ENCODE measurements at regions of chr2 and their contacts with region 1.

Region 1: DNA sequence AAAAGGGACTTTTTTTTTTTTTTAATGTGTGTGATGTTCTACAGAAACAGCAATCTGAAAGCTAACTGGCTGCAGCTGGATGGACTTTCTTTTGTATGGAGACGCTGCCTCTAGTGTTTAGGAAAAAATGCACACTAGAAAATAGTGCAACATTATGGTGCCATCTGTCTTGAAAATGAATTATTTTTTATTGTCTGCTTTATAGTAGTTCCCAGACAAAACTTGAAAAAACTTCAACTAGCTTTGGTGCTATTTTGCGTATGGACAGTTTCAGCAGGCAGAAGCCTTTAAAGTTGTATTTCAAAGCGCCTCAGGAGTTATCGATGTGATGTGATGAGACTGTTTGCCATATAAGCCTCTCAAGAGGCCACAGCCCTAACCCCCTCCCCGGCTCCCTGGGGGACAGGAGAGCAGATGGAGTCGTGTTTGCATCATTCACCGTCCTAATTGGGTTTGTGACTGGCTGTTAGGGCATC is 86.9 kb downstream of the LTBP1 start:
- DNase-seq: no peak
- H3K4me3 ChIP-seq: peak overlapping the region; percentile 44 to 51 (median 46)
- H3K27ac ChIP-seq: peak overlapping the region; percentile 69 to 77 (median 73)
- H3K4me1 ChIP-seq: peaks cover 13 to 70% (median 39%) of the 10 kb centered on the region in 4 donors
- H3K27me3 ChIP-seq: no peaks in the 10 kb centered on the region
- CTCF ChIP-seq: peak; percentile 68 to 78 (median 69)
- EP300 ChIP-seq: no peak
- POLR2A ChIP-seq: no peak

Region 2: GRCh38 chr2:32772638-32773447 is 260.8 kb before region 1 on chr2:
- intact Hi-C with region 1: loop called (anchors 2 kb)
- DNase-seq: no peak
- H3K4me3 ChIP-seq: no peak overlapping the region
- H3K27ac ChIP-seq: peak overlapping the region in 3 of 4 donors; percentile 12 to 35 (median 13)
- H3K4me1 ChIP-seq: peaks cover 10 to 14% (median 11%) of the 10 kb centered on the region in 4 donors
- H3K27me3 ChIP-seq: no peaks in the 10 kb centered on the region
- CTCF ChIP-seq: peak; percentile 71 to 81 (median 74)
- EP300 ChIP-seq: no peak
- POLR2A ChIP-seq: no peak

Region 3: DNA sequence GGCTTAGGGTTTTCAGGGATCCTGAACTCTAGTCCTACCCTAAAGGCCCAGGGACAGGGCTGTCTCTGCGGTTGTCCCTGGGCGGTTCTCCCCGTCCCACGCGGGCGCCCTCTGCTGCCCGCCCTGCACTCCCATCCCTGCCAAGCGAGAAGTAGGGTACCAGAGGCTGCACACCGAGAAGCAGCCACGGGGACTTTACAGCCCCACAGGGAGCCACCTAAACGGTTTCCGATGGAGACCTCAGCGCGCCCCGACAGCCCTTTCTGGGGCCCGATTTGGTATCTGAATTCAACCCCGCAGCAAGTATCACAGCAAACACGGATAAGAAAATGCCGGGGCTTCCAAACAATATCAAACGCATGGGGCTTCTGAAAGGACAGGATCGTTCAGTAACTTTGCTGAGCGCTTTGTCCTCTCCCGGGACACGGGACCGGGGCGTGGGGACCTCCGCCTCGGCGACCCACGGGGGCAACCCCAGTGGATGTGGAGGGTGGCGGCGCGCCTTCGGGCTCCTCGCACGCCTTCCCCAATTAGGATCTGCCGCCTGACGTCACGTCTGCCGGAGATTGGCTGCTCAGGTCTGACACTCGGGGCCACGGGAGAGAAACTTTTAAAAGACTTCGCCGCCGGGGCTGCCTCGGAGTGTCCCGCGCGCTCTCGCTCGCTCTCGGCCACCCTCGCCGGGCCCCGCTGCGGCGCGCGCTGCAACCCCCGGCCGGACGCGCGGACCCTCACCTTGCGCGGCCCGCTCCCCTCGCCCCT is 87.1 kb before region 1 on chr2 and contains the start of gene LTBP1:
- intact Hi-C with region 1: loop called (anchors 2 kb)
- DNase-seq: peak; percentile 92
- H3K4me3 ChIP-seq: peak within 1 kb of the TSS; percentile 76 to 93 (median 81)
- H3K27ac ChIP-seq: peak within 1 kb of the TSS; percentile 93 to 98 (median 95)
- H3K4me1 ChIP-seq: peaks cover 15 to 32% (median 25%) of the 10 kb centered on the region in 4 donors
- H3K27me3 ChIP-seq: no peaks in the 10 kb centered on the region
- CTCF ChIP-seq: peak; percentile 62 to 77 (median 72)
- EP300 ChIP-seq: no peak
- POLR2A ChIP-seq: no peak
- total RNA-seq, gene LTBP1: 254 to 465 (median 368) TPM

Region 4: DNA sequence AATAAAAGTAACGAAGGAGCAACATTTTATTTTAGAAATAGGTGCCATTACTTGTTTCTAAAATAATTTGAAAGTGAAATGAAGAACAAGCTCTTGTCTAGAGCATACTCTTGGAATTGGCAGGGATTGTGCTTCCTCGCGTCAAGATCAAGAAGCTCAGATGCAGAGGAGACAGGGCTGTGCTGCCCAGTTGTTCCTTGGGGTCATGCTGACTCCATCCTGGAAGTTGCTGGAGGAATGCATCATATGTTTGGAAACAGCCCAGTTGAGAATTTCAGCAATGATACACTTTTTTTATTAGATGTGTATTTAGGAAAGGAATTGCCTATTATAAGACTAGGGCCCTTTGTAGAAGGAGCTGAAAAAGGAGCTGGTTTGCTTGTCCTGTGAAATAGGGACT is 69.7 kb before region 1 on chr2:
- intact Hi-C with region 1: no loop called
- DNase-seq: no peak
- H3K4me3 ChIP-seq: no peak overlapping the region
- H3K27ac ChIP-seq: no peak overlapping the region
- H3K4me1 ChIP-seq: peaks cover 9 to 15% (median 11%) of the 10 kb centered on the region in 4 donors
- H3K27me3 ChIP-seq: no peaks in the 10 kb centered on the region
- CTCF ChIP-seq: no peak
- EP300 ChIP-seq: no peak
- POLR2A ChIP-seq: no peak

Region 5: DNA sequence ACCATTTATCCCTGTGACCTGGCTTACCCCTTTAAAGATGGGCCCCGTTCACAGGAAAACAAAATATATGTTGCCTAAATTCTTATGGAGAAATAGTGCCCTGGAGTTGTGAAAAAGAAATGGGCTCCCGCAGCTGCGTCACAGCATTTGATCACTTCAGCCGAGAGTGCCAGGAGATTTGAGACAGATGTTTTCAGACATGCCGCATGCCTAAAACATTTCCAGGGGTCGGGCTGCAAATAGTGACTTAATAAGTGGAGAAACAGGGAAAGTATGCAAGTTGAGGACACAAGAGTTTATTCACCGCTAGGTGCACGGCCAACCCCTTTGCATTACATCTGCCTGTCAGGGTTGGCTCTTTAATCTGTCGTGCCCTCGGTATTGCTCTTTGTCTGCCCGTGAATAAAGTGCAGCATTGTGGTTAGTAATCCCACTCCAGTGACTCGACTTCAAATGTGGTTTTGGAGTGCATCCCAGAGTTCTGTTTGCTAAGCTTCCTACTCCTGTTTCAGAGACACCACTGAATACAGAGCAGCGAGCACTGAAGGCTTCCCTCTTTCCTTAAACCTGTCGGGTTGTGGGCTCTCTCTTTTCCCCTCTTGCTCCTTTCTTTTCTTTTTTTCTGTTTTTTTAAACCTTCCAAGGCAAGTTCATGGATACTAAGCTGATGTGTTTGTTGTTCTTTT is 100.6 kb after region 1 on chr2:
- intact Hi-C with region 1: loop called (anchors 5 kb)
- DNase-seq: peak; percentile 93
- H3K4me3 ChIP-seq: peak overlapping the region; percentile 54 to 72 (median 62)
- H3K27ac ChIP-seq: peak overlapping the region; percentile 85 to 91 (median 90)
- H3K4me1 ChIP-seq: peaks cover 42 to 73% (median 69%) of the 10 kb centered on the region in 4 donors
- H3K27me3 ChIP-seq: no peaks in the 10 kb centered on the region
- CTCF ChIP-seq: peak in 1 of 3 experiments; percentile 25
- EP300 ChIP-seq: peak; percentile 31
- POLR2A ChIP-seq: peak; percentile 26

Region 6: DNA sequence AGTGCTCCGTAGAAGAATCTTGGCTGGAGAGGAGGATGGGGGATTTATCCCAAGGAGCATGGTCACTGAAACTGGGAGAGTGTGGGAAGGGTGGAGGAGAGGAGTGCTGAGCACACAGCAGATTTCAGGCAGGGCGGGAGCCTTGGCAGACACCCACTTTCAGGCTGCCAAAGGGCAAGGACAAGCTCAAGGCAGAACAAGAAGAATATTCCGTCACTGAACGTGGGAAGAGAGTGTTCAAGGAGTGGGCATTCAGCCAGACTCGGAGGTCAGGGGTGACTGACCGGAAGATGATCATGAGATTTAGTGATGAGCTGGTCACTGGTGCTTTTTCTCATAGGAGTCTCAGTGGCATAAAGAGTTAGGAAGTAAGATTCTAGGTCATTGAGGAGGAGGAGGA is 306.6 kb after region 1 on chr2:
- intact Hi-C with region 1: no loop called
- DNase-seq: peak; percentile 96
- H3K4me3 ChIP-seq: no peak overlapping the region
- H3K27ac ChIP-seq: peak overlapping the region in 3 of 4 donors; percentile 25 to 46 (median 44)
- H3K4me1 ChIP-seq: peaks cover 5 to 19% (median 14%) of the 10 kb centered on the region in 4 donors
- H3K27me3 ChIP-seq: no peaks in the 10 kb centered on the region
- CTCF ChIP-seq: no peak
- EP300 ChIP-seq: no peak
- POLR2A ChIP-seq: no peak

Region 7: DNA sequence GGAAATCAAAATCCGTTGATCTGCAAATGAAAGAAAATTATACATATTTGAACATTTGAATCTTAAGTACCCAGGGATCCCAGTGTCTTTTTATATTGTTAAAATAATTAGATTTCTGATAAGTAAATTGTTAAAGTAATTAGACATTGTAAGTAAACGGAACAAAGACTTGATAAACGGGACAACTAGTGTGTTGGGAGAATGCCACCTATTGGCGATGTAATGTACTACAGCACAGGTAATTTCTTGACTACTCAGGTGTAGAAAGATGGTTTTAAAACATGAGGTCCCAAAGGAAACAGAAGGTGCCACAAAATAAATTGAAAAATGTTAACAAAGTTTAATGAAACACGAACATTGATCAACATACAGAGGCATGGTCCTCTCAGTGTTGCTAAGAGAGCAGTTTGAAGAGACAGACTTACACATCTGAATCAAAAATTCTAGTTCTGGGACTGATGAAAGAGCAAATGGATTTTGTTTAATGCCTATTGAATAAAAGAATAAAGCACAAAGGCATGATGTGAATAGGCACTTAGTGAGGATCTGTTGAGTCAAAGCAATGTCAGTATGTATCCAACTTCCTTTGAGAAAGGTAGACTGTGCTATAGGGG is 339.4 kb after region 1 on chr2:
- intact Hi-C with region 1: loop called (anchors 10 kb)
- DNase-seq: no peak
- H3K4me3 ChIP-seq: no peak overlapping the region
- H3K27ac ChIP-seq: peak overlapping the region in 1 of 4 donors; percentile 57
- H3K4me1 ChIP-seq: peaks cover 0 to 44% (median 37%) of the 10 kb centered on the region in 4 donors
- H3K27me3 ChIP-seq: no peaks in the 10 kb centered on the region
- CTCF ChIP-seq: peak; percentile 61 to 80 (median 73)
- EP300 ChIP-seq: no peak
- POLR2A ChIP-seq: no peak

Region 8: GRCh38 chr2:33412920-33413319 is 379.3 kb after region 1 on chr2:
- intact Hi-C with region 1: no loop called
- DNase-seq: no peak
- H3K4me3 ChIP-seq: no peak overlapping the region
- H3K27ac ChIP-seq: no peak overlapping the region
- H3K4me1 ChIP-seq: peaks cover 0 to 3% (median 0%) of the 10 kb centered on the region in 4 donors
- H3K27me3 ChIP-seq: no peaks in the 10 kb centered on the region
- CTCF ChIP-seq: peak; percentile 26 to 51 (median 30)
- EP300 ChIP-seq: no peak
- POLR2A ChIP-seq: no peak

Region 9: DNA sequence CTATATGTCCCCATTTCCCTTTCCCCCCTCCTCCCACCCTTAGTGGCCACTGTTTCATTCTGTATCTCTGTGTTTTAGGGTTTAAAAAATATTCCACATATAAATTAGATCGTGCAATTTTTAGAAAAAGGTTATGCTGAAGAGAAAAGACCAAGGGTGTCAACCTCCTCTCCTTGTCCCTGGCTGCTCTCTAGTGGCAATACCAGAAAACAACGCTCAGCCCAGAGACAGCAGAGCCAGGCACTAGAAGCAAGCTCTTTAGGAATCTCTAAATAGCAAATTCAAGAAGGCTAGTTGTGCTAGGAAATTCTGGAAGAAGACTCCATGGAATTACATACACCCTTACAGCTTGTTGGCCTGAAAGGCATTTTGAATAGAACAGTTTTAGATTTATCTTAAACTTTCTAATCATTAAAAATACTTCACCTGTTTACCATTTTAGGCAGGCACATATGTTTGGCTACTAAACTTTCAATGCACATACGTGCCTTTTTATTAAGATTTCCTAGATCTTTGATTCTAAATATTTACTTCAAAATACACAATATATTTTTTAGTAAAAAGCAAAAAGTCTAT is 407.7 kb after region 1 on chr2:
- intact Hi-C with region 1: loop called (anchors 5 kb)
- DNase-seq: no peak
- H3K4me3 ChIP-seq: no peak overlapping the region
- H3K27ac ChIP-seq: peak overlapping the region in 1 of 4 donors; percentile 21
- H3K4me1 ChIP-seq: peaks cover 22 to 48% (median 32%) of the 10 kb centered on the region in 4 donors
- H3K27me3 ChIP-seq: no peaks in the 10 kb centered on the region
- CTCF ChIP-seq: peak; percentile 70 to 83 (median 83)
- EP300 ChIP-seq: no peak
- POLR2A ChIP-seq: no peak

Region 10: GRCh38 chr2:33583194-33583938 is 549.7 kb after region 1 on chr2:
- intact Hi-C with region 1: loop called (anchors 10 kb)
- DNase-seq: no peak
- H3K4me3 ChIP-seq: no peak overlapping the region
- H3K27ac ChIP-seq: peak overlapping the region in 2 of 4 donors; percentile 5 to 46
- H3K4me1 ChIP-seq: peaks cover 7 to 42% (median 36%) of the 10 kb centered on the region in 4 donors
- H3K27me3 ChIP-seq: no peaks in the 10 kb centered on the region
- CTCF ChIP-seq: peak; percentile 80 to 91 (median 88)
- EP300 ChIP-seq: no peak
- POLR2A ChIP-seq: no peak

Measured in esophagus muscularis mucosa (tissue), 4 donors.